WTC11 (cell line): ENCODE measurements at regions of chr1 and their contacts with region 1.

Region 1: DNA sequence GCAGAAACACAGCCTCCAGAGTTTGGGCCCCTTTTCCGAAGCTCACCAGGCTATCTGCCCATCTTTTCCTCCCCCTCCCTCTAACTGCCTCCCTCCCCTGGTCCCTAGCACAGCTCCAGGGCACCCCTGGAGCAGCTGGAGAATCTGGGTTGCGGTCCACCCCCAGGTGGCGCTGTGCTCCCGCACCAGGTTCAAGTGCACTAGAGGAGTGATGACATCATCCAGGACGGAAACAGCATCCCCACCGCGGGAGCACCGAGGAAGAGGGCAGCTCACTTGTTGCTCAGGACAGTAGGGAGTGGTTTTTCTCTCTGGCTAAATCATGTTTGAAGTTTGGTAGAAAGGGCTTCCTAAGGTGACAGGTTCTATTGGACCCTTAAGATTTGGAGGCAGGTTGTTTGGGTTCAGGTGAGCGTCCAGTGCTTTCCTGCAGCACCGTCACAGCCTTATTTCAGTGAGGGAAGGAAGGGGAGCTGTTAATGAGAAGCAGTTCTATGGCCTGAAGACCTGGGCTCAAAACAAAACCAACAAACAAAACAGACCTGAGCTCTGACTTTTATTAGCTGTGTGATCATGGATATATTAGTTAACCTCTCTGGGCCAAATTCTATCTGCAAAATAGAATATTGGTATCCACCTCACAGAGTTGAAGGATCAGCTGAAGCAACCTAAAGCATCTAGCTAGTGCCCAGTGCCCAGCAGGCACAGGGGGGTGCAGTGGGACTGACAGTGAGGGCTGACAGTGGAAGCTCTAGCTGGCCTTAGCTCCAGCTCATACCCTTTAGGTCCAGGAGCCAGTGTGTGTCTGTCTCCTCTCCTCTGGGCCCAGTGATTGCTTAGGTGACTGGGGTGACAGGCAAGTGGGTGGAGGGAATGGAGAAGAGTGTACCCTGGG is 7.5 kb downstream of the SHISA4 start:
- DNase-seq: peak; percentile 97
- ATAC-seq: peak; percentile 85
- H3K4me3 Mint-ChIP-seq: peak overlapping the region; percentile 37; the same call in 1 of the 2 replicates
- H3K27ac Mint-ChIP-seq: peak overlapping the region; percentile 62
- H3K4me1 Mint-ChIP-seq: peaks cover 35% of the 10 kb centered on the region
- H3K27me3 Mint-ChIP-seq: peaks cover 4% of the 10 kb centered on the region
- CTCF ChIP-seq: peak; percentile 94

Region 2: GRCh38 chr1:201916649-201917249 is 20.6 kb after region 1 on chr1:
- CTCF ChIA-PET with region 1: interaction called, 17 read pairs
- POLR2A ChIA-PET with region 1: no interaction called
- DNase-seq: no peak
- ATAC-seq: no peak
- H3K4me3 Mint-ChIP-seq: no peak overlapping the region
- H3K27ac Mint-ChIP-seq: peak overlapping the region; percentile 45; the same call in 1 of the 2 replicates
- H3K4me1 Mint-ChIP-seq: peaks cover 12% of the 10 kb centered on the region
- H3K27me3 Mint-ChIP-seq: no peaks in the 10 kb centered on the region; the same call in 1 of the 2 replicates
- CTCF ChIP-seq: no peak

Region 3: DNA sequence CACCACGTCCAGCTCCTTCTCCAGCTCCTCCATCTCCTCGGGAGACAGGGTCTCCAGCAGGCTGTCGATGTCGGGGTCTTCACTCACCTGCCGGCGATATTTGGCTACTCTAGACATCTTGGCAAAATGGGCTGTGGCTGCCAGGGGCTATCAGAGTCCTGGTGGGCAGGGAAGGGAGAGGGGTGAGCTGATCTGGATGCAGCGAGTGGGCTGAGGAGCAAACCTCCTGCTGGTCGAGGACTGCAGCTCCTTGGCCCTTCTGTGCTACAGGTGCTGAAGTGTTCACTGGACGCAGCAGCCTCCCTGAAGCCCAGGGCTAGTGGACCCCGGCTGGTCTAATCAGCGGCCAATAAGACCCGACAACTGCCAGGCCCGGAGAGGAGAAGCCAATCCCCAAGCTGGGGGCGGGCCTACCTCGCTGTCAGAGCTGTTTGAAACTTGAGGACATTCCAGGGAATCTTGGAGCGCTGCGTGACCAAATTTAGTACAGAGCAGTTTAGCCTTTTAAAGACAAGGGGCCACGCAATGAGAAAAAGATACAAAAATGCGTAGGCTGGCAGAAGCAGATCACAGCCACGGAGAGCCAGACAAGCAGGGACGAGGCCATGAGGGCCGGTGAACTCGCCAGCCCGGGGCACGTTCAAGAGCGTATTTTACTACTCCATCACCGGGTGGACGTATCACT is 50.2 kb after region 1 on chr1 and contains the start of gene LMOD1:
- CTCF ChIA-PET with region 1: interaction called, 85 read pairs
- POLR2A ChIA-PET with region 1: interaction called, 14 read pairs
- DNase-seq: peak; percentile 91
- ATAC-seq: peak; percentile 85
- H3K4me3 Mint-ChIP-seq: peak within 1 kb of the TSS; percentile 82
- H3K27ac Mint-ChIP-seq: peak within 1 kb of the TSS; percentile 50
- H3K4me1 Mint-ChIP-seq: peaks cover 40% of the 10 kb centered on the region
- H3K27me3 Mint-ChIP-seq: peaks cover 32% of the 10 kb centered on the region
- CTCF ChIP-seq: no peak
- total RNA-seq, gene LMOD1: 1.5 to 1.9 TPM (median 1.6 TPM) in 3 replicates

Region 4: GRCh38 chr1:201970334-201971159 is 74.4 kb after region 1 on chr1:
- CTCF ChIA-PET with region 1: interaction called, 64 read pairs
- POLR2A ChIA-PET with region 1: interaction called, 5 read pairs
- DNase-seq: no peak
- ATAC-seq: no peak
- H3K4me3 Mint-ChIP-seq: no peak overlapping the region
- H3K27ac Mint-ChIP-seq: no peak overlapping the region
- H3K4me1 Mint-ChIP-seq: no peaks in the 10 kb centered on the region
- H3K27me3 Mint-ChIP-seq: no peaks in the 10 kb centered on the region
- CTCF ChIP-seq: no peak

Region 5: GRCh38 chr1:202009326-202010179 is 113.4 kb after region 1 on chr1:
- CTCF ChIA-PET with region 1: interaction called, 71 read pairs
- POLR2A ChIA-PET with region 1: interaction called, 4 read pairs
- DNase-seq: peak; percentile 85
- ATAC-seq: peak; percentile 15
- H3K4me3 Mint-ChIP-seq: peak overlapping the region; percentile 76
- H3K27ac Mint-ChIP-seq: peak overlapping the region; percentile 98
- H3K4me1 Mint-ChIP-seq: peaks cover 48% of the 10 kb centered on the region
- H3K27me3 Mint-ChIP-seq: no peaks in the 10 kb centered on the region
- CTCF ChIP-seq: peak; percentile 94

Region 6: GRCh38 chr1:202135221-202135721 is 239.1 kb after region 1 on chr1:
- CTCF ChIA-PET with region 1: interaction called, 21 read pairs
- POLR2A ChIA-PET with region 1: interaction called, 3 read pairs
- DNase-seq: peak; percentile 62
- ATAC-seq: peak; percentile 77
- H3K4me3 Mint-ChIP-seq: no peak overlapping the region
- H3K27ac Mint-ChIP-seq: peak overlapping the region; percentile 60; the same call in 1 of the 2 replicates
- H3K4me1 Mint-ChIP-seq: peaks cover 23% of the 10 kb centered on the region
- H3K27me3 Mint-ChIP-seq: no peaks in the 10 kb centered on the region
- CTCF ChIP-seq: peak; percentile 75